Tibial artery (tissue), 4 donors: ENCODE measurements at regions of chr22 and their contacts with region 1.

Region 1: DNA sequence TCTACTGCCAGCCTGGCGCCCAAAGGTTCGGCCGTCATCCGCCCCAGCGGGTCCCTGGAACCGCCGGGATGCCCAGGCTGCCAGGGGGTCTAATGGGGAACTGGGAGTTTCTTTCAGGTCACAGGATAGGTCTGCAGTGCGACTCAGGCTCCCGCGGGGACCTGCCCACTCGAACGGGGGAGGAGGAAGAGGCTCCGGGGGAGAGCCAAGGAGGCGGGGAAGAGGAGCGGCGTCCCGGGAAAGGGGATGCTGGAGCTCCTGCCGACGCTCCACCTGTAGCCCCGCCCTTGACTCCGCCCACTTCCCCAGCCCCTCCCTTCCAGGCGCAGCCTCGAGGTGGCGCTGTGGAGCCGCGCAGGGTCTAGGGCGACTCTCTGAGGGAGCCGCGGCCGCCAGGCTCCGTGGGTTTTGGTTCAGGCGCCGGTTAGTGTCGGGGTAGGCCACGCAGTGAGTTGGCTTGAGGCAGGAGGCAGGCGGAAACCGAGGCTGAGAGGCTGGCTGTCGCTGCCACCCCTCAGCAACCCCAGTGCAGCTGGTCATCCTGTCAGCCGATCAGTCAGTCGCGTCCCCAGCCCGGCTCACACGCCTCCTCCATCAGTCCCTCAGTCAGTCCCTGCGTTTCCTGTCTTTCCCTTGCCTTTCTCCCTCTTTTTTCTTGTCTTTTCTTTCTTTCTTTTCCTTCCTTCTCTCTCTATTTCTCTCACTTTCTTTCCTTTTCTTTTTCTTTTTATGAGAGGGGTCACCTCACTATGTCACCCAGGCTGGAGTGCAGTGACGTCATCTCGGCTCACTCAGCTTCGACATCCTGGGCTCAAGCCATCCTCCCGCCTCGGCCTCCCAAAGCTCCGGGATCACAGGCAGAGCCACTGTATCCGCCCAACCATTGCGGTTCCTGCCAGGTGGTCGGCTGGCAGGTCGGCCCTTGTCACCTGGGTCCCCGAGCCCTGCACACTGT is 26.4 kb downstream of the YWHAH start:
- DNase-seq: peak; percentile 67 to 87
- H3K4me3 ChIP-seq: peak overlapping the region; percentile 30 to 55
- H3K27ac ChIP-seq: peak overlapping the region; percentile 36 to 44
- H3K4me1 ChIP-seq: peaks cover 0 to 11% (median 9%) of the 10 kb centered on the region in 4 donors
- H3K27me3 ChIP-seq: no peaks in the 10 kb centered on the region
- CTCF ChIP-seq: peak; percentile 80 to 97

Region 2: DNA sequence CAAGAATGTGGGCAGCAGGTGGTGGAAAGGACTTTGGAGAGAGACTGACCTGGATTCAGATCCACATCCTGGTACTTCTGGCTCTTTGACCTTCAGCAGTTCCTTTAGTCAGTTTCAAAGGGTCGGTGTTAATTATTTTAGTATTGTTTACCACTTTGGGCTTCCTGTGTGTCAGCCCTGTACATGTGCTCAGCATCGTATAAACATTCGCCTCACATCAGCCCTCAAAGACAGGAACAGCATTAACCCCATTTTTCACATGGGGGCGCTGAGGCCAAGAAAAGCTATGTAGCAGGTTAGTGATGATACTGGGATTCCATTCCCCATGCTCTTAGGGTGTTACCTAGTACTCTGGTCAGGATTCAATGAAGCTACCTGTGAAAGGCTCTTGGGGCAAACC is 98.6 kb before region 1 on chr22:
- intact Hi-C with region 1: loop called (anchors 10 kb)
- DNase-seq: no peak
- H3K4me3 ChIP-seq: no peak overlapping the region
- H3K27ac ChIP-seq: no peak overlapping the region
- H3K4me1 ChIP-seq: no peaks in the 10 kb centered on the region
- H3K27me3 ChIP-seq: no peaks in the 10 kb centered on the region
- CTCF ChIP-seq: no peak

Region 3: GRCh38 chr22:32265882-32266767 is 295.4 kb after region 1 on chr22:
- intact Hi-C with region 1: loop called (anchors 10 kb)
- DNase-seq: peak in 1 of 2 donors; percentile 66
- H3K4me3 ChIP-seq: no peak overlapping the region
- H3K27ac ChIP-seq: no peak overlapping the region
- H3K4me1 ChIP-seq: no peaks in the 10 kb centered on the region
- H3K27me3 ChIP-seq: peaks cover 0 to 12% of the 10 kb centered on the region in 2 donors
- CTCF ChIP-seq: peak; percentile 74